ENCODE measurements at regions of chr19 and their contacts with region 1.

Region 1: GRCh38 chr19:46115396-46116106 is 8.9 kb downstream of the IGFL3 start:
- DNase-seq: peak; percentile 85
- H3K4me3 Mint-ChIP-seq: no peak overlapping the region
- H3K27ac Mint-ChIP-seq: no peak overlapping the region
- H3K4me1 Mint-ChIP-seq: peaks cover 16% of the 10 kb centered on the region
- H3K27me3 Mint-ChIP-seq: peaks cover 47% of the 10 kb centered on the region

Region 2: GRCh38 chr19:46147791-46148288 is 32.3 kb after region 1 on chr19 and contains the start of gene IGFL2:
- CTCF ChIA-PET with region 1: no interaction called
- intact Hi-C with region 1: loop called (anchors 2 kb)
- DNase-seq: peak; percentile 43
- H3K4me3 Mint-ChIP-seq: no peak within 1 kb of the TSS
- H3K27ac Mint-ChIP-seq: no peak within 1 kb of the TSS
- H3K4me1 Mint-ChIP-seq: peaks cover 10% of the 10 kb centered on the region
- H3K27me3 Mint-ChIP-seq: peaks cover 35% of the 10 kb centered on the region
- total RNA-seq, gene IGFL2: not detected

Region 3: GRCh38 chr19:46181388-46181779 is 65.8 kb after region 1 on chr19:
- CTCF ChIA-PET with region 1: no interaction called
- intact Hi-C with region 1: loop called (anchors 1 kb)
- DNase-seq: peak; percentile 72
- H3K4me3 Mint-ChIP-seq: no peak overlapping the region
- H3K27ac Mint-ChIP-seq: peak overlapping the region; percentile 79
- H3K4me1 Mint-ChIP-seq: peaks cover 42% of the 10 kb centered on the region
- H3K27me3 Mint-ChIP-seq: peaks cover 21% of the 10 kb centered on the region

Measured in activated naive CD4-positive, alpha-beta T cell treated with anti-CD3 and anti-CD28 coated beads for 36 hours (primary cell).